B cell (primary cell): ENCODE measurements at regions of chr5 and their contacts with region 1.

Region 1: GRCh38 chr5:151771259-151772028 is at the start of gene G3BP1:
- DNase-seq: peak; percentile 100
- ATAC-seq: peak; percentile 74
- H3K4me3 ChIP-seq: peak within 1 kb of the TSS; percentile 71 to 91 (median 81)
- H3K4me3 Mint-ChIP-seq: peak within 1 kb of the TSS; percentile 95
- H3K27ac ChIP-seq: peak within 1 kb of the TSS; percentile 87 to 92
- H3K27ac Mint-ChIP-seq: peak within 1 kb of the TSS; percentile 93
- H3K4me1 ChIP-seq: peaks cover 42 to 45% of the 10 kb centered on the region in 2 donors
- H3K4me1 Mint-ChIP-seq: peaks cover 44% of the 10 kb centered on the region
- H3K27me3 ChIP-seq: no peaks in the 10 kb centered on the region
- H3K27me3 Mint-ChIP-seq: no peaks in the 10 kb centered on the region
- CTCF ChIP-seq: peak; percentile 66
- total RNA-seq, gene G3BP1: 159 and 173 TPM in 2 replicates

Region 2: GRCh38 chr5:151659001-151659754 is 112.3 kb before region 1 on chr5:
- CTCF ChIA-PET with region 1: interaction called, 13 read pairs
- POLR2A ChIA-PET with region 1: interaction called, 7 read pairs
- intact Hi-C with region 1: loop called (anchors 1 kb)
- DNase-seq: peak; percentile 86
- ATAC-seq: peak; percentile 90
- H3K4me3 ChIP-seq: no peak overlapping the region
- H3K4me3 Mint-ChIP-seq: no peak overlapping the region
- H3K27ac ChIP-seq: no peak overlapping the region
- H3K27ac Mint-ChIP-seq: no peak overlapping the region
- H3K4me1 ChIP-seq: peaks cover 15 to 22% of the 10 kb centered on the region in 2 donors
- H3K4me1 Mint-ChIP-seq: peaks cover 25% of the 10 kb centered on the region
- H3K27me3 ChIP-seq: peaks cover 0 to 4% (median 0%) of the 10 kb centered on the region in 4 experiments
- H3K27me3 Mint-ChIP-seq: peaks cover 4% of the 10 kb centered on the region
- CTCF ChIP-seq: peak; percentile 89

Region 3: DNA sequence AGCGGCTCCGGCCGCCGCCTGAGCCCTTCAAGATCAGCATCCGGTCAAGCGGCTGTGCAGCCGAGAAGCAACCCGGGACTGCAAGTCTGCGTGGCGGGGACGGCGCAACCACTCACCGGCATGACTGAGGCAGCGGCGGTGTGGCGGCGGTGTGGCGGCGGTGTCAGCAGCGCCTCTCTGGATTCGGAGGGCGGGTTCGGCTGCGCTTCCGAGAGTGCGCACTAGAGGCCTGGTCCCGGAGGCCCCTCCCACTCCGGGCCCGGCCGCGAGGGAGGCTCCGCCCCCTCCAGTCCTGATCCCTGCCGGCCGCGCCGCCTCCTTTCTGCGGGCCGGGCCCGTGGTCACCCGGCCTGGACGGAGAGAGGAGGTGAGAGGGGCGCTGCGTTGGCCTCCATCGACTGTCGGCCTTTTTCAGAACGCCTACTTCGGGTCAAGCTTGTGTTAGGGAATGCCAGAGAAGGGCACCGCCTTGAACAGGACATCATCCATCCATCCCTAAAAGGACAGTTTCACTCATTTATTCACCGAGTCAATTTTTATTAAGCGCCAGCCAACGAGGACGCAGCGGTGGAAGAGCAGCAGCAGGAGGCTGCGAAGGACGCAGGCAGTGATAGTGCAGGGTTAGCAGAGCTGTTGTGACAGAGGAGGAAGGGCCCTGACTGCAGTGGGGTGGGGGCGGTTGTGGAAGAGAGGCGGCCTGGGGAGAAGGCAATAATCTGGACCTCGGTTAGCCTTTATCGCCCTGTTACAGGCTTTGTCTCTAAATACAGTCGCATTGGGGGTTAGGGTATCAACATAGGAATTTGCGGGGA is 12.8 kb before region 1 on chr5 and contains the start of gene ATOX1:
- CTCF ChIA-PET with region 1: interaction called, 7 read pairs
- POLR2A ChIA-PET with region 1: interaction called, 40 read pairs
- intact Hi-C with region 1: loop called (anchors 1 kb)
- DNase-seq: peak; percentile 92
- ATAC-seq: peak; percentile 100
- H3K4me3 ChIP-seq: peak within 1 kb of the TSS; percentile 62 to 94 (median 81)
- H3K4me3 Mint-ChIP-seq: peak within 1 kb of the TSS; percentile 82
- H3K27ac ChIP-seq: peak within 1 kb of the TSS; percentile 52 to 75
- H3K27ac Mint-ChIP-seq: peak within 1 kb of the TSS; percentile 74
- H3K4me1 ChIP-seq: peaks cover 22 to 29% of the 10 kb centered on the region in 2 donors
- H3K4me1 Mint-ChIP-seq: peaks cover 36% of the 10 kb centered on the region
- H3K27me3 ChIP-seq: no peaks in the 10 kb centered on the region
- H3K27me3 Mint-ChIP-seq: no peaks in the 10 kb centered on the region
- CTCF ChIP-seq: no peak
- total RNA-seq, gene ATOX1: 32.0 and 37.3 TPM in 2 replicates

Region 4: GRCh38 chr5:151784141-151784540 is 12.7 kb after region 1 on chr5:
- CTCF ChIA-PET with region 1: interaction called, 3 read pairs
- POLR2A ChIA-PET with region 1: interaction called, 3 read pairs
- intact Hi-C with region 1: loop called (anchors 1 kb)
- DNase-seq: no peak
- ATAC-seq: no peak
- H3K4me3 ChIP-seq: no peak overlapping the region
- H3K4me3 Mint-ChIP-seq: no peak overlapping the region
- H3K27ac ChIP-seq: peak overlapping the region in 1 of 2 donors; percentile 41
- H3K27ac Mint-ChIP-seq: no peak overlapping the region
- H3K4me1 ChIP-seq: peaks cover 20 to 39% of the 10 kb centered on the region in 2 donors
- H3K4me1 Mint-ChIP-seq: peaks cover 54% of the 10 kb centered on the region
- H3K27me3 ChIP-seq: no peaks in the 10 kb centered on the region
- H3K27me3 Mint-ChIP-seq: no peaks in the 10 kb centered on the region
- CTCF ChIP-seq: no peak